IMR-90 (cell line): ENCODE measurements at regions of chr17 and their contacts with region 1.

Region 1: DNA sequence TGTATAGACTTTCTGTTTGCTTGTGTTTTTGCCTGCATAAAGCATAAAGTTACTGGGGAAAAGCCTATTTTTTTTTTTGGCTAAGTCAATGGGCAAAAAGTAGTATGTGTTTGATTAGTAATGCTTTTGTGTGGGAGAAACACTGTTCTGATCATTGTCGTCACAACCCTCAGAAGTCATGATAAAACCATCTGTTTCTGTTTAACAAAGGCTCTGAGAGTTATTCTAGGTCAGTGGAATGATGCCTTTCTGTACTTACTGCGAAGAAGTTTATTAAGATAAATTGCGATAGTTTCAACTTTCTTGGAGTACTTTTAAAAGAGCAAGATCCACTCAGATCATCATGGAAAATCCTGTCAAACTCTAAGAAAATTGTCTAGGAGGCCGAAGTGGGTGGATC is 80.9 kb downstream of the PRKCA start:
- DNase-seq: peak; percentile 96
- ATAC-seq: peak; percentile 81
- H3K4me3 ChIP-seq: no peak overlapping the region
- H3K27ac ChIP-seq: peak overlapping the region; percentile 81; the same call in 1 of the 2 replicates
- H3K4me1 ChIP-seq: peaks cover 13% of the 10 kb centered on the region
- H3K27me3 ChIP-seq: no peaks in the 10 kb centered on the region
- CTCF ChIP-seq: no peak
- POLR2A ChIP-seq: no peak
- RAD21 ChIP-seq: no peak; the same call in 1 of the 2 replicates

Region 2: GRCh38 chr17:66222798-66223350 is 160.5 kb before region 1 on chr17:
- CTCF ChIA-PET with region 1: no interaction called
- POLR2A ChIA-PET with region 1: no interaction called
- dilution Hi-C with region 1: no loop called
- in situ Hi-C with region 1: no loop called
- intact Hi-C with region 1: no loop called
- DNase-seq: no peak
- ATAC-seq: no peak
- H3K4me3 ChIP-seq: no peak overlapping the region
- H3K27ac ChIP-seq: no peak overlapping the region
- H3K4me1 ChIP-seq: no peaks in the 10 kb centered on the region
- H3K27me3 ChIP-seq: peaks cover 17% of the 10 kb centered on the region
- CTCF ChIP-seq: no peak
- POLR2A ChIP-seq: no peak
- RAD21 ChIP-seq: no peak

Region 3: DNA sequence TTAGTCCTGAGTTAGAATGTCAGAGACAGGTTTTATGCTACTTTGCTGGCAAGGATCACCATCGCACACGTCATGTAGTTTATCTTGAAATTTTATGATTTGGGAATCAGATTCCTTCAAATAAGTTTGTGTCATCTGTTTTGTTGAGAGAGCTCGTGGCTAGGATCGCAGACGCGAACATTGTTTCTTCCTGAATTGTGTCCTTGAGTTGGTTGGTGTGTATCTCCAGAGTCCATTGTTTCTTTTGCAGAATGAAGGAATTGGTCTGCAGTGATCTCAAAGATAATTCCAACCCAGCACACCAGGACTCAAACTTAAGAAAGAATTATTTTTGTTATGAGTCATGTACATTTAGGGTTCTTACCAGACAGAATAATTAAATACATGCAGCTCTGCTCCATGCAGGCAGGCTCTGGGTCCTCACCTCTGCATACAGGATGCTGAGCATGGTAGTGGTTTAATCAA is 29.4 kb before region 1 on chr17:
- CTCF ChIA-PET with region 1: no interaction called
- POLR2A ChIA-PET with region 1: no interaction called
- dilution Hi-C with region 1: no loop called
- in situ Hi-C with region 1: no loop called
- intact Hi-C with region 1: loop called (anchors 2 kb)
- DNase-seq: peak; percentile 76
- ATAC-seq: peak; percentile 68
- H3K4me3 ChIP-seq: no peak overlapping the region
- H3K27ac ChIP-seq: peak overlapping the region; percentile 68; the same call in 1 of the 2 replicates
- H3K4me1 ChIP-seq: peaks cover 25% of the 10 kb centered on the region
- H3K27me3 ChIP-seq: no peaks in the 10 kb centered on the region
- CTCF ChIP-seq: no peak
- POLR2A ChIP-seq: no peak
- RAD21 ChIP-seq: no peak

Region 4: GRCh38 chr17:66474806-66475497 is 91.6 kb after region 1 on chr17:
- CTCF ChIA-PET with region 1: no interaction called
- POLR2A ChIA-PET with region 1: no interaction called
- dilution Hi-C with region 1: no loop called
- in situ Hi-C with region 1: no loop called
- intact Hi-C with region 1: no loop called
- DNase-seq: no peak
- ATAC-seq: no peak
- H3K4me3 ChIP-seq: no peak overlapping the region
- H3K27ac ChIP-seq: no peak overlapping the region
- H3K4me1 ChIP-seq: peaks cover 10% of the 10 kb centered on the region
- H3K27me3 ChIP-seq: no peaks in the 10 kb centered on the region
- CTCF ChIP-seq: no peak
- POLR2A ChIP-seq: no peak
- RAD21 ChIP-seq: no peak